Transverse colon (tissue), 4 donors: ENCODE measurements at regions of chr2 and their contacts with region 1.

Region 1: DNA sequence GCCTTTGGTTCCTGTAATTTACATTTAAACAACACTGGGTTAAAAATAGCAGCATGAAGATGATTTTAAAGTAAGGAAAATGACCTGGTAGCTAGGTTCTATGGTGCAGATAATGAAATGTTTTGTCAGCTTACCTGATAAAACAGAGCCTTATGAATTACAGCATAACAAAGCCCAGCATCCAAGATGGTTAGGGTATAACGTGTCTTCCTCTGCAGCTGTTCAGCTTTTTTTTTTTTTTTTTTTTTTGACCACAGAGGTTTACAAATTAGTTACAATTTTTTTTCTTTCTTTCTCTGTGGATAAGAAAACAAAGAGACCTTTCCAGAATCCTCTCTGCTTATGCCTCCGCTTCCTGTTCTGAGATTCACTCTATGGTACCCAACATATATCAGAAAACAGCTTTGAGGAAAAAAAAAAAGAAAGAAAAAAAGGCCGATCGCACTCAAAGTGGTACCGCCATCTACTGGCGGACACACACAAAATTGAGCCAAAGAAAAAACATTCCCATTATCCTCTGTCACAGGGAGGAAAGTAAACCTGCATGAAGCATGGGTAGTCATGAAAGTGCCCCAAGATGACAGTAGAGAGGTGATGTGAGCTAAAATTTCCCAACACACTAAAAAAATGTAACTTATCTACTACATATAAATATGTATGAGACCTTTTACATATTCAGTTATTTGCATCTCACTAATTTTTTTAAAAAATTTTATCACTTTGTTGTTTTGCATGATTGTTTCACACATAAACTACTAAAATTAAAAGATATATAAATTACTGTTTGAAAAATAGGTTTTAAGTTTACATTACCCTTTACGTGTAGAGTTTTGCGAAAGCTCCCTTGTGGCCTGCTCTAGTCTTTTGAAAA is at the start of gene SCN3A:
- DNase-seq: peak; percentile 16
- H3K4me3 ChIP-seq: no peak within 1 kb of the TSS
- H3K27ac ChIP-seq: no peak within 1 kb of the TSS
- H3K4me1 ChIP-seq: no peaks in the 10 kb centered on the region
- H3K27me3 ChIP-seq: no peaks in the 10 kb centered on the region
- CTCF ChIP-seq: peak; percentile 27 to 64 (median 56)
- EP300 ChIP-seq: no peak
- POLR2A ChIP-seq: no peak
- total RNA-seq, gene SCN3A: 0.60 to 2.5 (median 1.4) TPM

Region 2: GRCh38 chr2:165015052-165015642 is 188.8 kb before region 1 on chr2:
- in situ Hi-C with region 1: loop called in 2 of 4 experiments (anchors 25 kb)
- intact Hi-C with region 1: no loop called
- DNase-seq: peak; percentile 65
- H3K4me3 ChIP-seq: no peak overlapping the region
- H3K27ac ChIP-seq: no peak overlapping the region
- H3K4me1 ChIP-seq: no peaks in the 10 kb centered on the region
- H3K27me3 ChIP-seq: peaks cover 7% of the 10 kb centered on the region
- CTCF ChIP-seq: peak; percentile 43 to 81 (median 75)
- EP300 ChIP-seq: no peak
- POLR2A ChIP-seq: no peak